Activated naive CD4-positive, alpha-beta T cell treated with anti-CD3 and anti-CD28 coated beads for 36 hours (primary cell): ENCODE measurements at regions of chr2 and their contacts with region 1.

Region 1: GRCh38 chr2:65129826-65130663 is at the start of gene RAB1A:
- DNase-seq: peak; percentile 100
- H3K4me3 Mint-ChIP-seq: peak within 1 kb of the TSS; percentile 95
- H3K27ac Mint-ChIP-seq: peak within 1 kb of the TSS; percentile 94
- H3K4me1 Mint-ChIP-seq: peaks cover 35% of the 10 kb centered on the region
- H3K27me3 Mint-ChIP-seq: no peaks in the 10 kb centered on the region
- total RNA-seq, gene RAB1A: 60.8 to 61.3 TPM

Region 2: GRCh38 chr2:64653349-64654062 is 476.5 kb before region 1 on chr2 and contains the start of gene SERTAD2:
- CTCF ChIA-PET with region 1: no interaction called
- intact Hi-C with region 1: loop called (anchors 2 kb)
- DNase-seq: peak; percentile 85
- H3K4me3 Mint-ChIP-seq: peak within 1 kb of the TSS; percentile 79
- H3K27ac Mint-ChIP-seq: peak within 1 kb of the TSS; percentile 83
- H3K4me1 Mint-ChIP-seq: peaks cover 74% of the 10 kb centered on the region
- H3K27me3 Mint-ChIP-seq: no peaks in the 10 kb centered on the region
- total RNA-seq, gene SERTAD2: 11.4 to 11.6 TPM

Region 3: GRCh38 chr2:65112633-65113032 is 17.4 kb before region 1 on chr2:
- CTCF ChIA-PET with region 1: no interaction called
- intact Hi-C with region 1: loop called (anchors 2 kb)
- DNase-seq: no peak
- H3K4me3 Mint-ChIP-seq: no peak overlapping the region
- H3K27ac Mint-ChIP-seq: no peak overlapping the region
- H3K4me1 Mint-ChIP-seq: peaks cover 45% of the 10 kb centered on the region
- H3K27me3 Mint-ChIP-seq: no peaks in the 10 kb centered on the region

Region 4: DNA sequence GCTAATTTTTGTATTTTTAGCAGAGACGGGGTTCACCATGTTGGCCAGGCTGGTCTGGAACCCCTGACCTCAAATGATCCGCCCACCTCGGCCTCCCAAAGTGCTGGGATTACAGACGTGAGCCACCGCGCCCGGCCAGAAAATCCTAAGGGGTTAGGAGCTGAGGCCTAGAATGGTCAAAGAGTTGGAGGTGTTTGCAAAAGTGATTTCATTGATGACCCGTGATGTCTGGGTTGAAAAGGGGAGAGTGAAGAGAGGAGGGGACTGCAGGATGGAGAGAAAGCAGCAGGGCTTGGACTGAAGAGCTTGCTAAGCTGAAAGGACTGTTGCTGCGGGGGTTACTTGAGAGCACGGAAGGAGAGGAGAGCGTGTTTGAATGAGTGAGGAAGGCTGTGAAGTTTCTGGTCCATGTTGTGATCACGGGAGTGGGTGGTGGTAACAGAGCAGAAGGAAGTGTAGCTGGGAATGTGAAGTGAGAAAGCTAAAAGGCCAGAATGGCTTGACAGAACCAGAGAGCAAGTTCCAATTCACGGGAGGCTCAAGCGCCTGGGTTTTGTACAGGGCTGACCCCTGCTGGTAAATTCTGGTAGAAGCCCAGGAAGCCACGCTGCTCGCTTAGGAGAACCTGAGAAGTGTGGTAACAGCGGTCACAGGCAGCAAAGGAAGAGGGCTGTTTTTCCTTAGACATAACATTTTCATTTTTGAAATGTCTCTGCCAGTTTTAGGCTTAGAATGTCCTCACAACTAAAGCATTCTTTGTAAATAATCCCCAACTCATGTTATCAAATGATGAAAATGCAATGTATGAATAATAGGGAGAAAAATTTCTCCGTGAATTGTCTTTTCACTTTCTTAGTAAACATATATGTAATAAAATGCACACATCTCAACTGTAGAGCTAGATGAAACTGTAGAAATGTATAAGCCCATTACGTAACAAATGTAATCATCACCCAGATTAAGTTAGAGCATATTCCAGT is 57.1 kb after region 1 on chr2:
- CTCF ChIA-PET with region 1: no interaction called
- intact Hi-C with region 1: loop called (anchors 2 kb)
- DNase-seq: peak; percentile 81
- H3K4me3 Mint-ChIP-seq: no peak overlapping the region
- H3K27ac Mint-ChIP-seq: no peak overlapping the region
- H3K4me1 Mint-ChIP-seq: peaks cover 4% of the 10 kb centered on the region
- H3K27me3 Mint-ChIP-seq: peaks cover 5% of the 10 kb centered on the region

Region 5: DNA sequence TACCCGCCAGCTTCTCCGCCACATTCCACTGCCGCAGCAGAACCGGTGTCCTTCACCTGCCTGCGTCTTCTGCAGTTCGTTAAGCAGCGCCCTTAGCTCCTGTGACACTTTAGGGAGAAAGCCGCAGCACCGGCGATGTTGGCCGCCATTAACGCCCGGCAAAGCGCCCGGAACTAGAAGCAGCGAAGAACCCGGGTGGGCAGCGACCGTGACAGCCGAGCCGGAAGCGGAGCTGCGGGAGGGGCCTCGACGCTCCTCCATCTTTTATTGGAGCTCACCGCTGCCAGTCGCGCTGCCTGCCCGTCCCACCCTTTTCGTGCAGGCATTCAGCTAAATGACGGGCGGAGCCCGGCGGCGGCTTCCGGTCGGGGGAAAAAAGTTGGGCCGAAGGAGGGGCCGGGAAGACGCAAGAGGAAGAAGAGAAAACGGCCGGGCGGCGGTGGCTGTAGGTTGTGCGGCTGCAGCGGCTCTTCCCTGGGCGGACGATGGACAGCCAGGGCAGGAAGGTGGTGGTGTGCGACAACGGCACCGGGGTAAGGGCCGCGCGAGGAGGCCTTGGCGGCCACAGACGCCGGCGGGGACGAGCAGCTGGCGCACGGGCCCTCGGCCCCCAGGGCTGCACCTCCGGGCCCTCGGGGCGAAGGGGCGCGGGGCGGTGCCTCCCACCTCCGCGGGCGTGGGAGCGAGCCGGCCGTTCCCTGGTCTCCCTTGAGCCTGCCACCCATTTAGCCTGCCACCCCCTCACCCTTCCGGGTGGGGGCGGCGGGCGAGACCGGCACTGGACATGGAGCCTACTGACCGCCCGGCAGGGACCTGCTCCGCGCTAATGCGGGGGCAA is 97.6 kb after region 1 on chr2 and contains the start of gene ACTR2:
- CTCF ChIA-PET with region 1: no interaction called
- intact Hi-C with region 1: loop called (anchors 1 kb)
- DNase-seq: peak; percentile 96
- H3K4me3 Mint-ChIP-seq: peak within 1 kb of the TSS; percentile 98
- H3K27ac Mint-ChIP-seq: peak within 1 kb of the TSS; percentile 99
- H3K4me1 Mint-ChIP-seq: peaks cover 41% of the 10 kb centered on the region
- H3K27me3 Mint-ChIP-seq: no peaks in the 10 kb centered on the region
- total RNA-seq, gene ACTR2: 358 to 366 TPM